ENCODE measurements at regions of chr10 and their contacts with region 1.

Region 1: DNA sequence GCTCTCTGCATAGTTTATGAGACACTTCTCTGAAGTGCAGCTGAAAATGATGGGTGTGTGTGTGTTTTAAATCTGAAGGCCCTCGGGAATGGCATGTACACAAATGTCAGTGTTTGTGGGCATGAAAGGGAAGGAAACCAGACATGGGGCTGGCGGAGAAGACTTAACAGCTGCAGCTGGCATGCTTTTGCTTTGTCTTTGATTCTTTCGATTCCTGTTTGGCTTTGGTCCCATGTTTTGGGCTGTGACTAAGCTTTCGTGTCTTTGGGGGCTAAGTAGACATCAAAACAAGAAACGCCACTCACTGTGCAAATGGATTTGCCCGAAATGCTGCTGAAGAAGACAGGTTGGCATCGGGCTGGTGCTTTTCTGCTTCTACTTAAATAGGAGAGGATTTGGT is 179.3 kb downstream of the PFKFB3 start:
- DNase-seq: peak; percentile 64
- H3K4me3 Mint-ChIP-seq: peak overlapping the region; percentile 47
- H3K27ac Mint-ChIP-seq: peak overlapping the region; percentile 77
- H3K4me1 Mint-ChIP-seq: peaks cover 29% of the 10 kb centered on the region
- H3K27me3 Mint-ChIP-seq: no peaks in the 10 kb centered on the region

Region 2: GRCh38 chr10:6364893-6365292 is 17.2 kb before region 1 on chr10:
- CTCF ChIA-PET with region 1: interaction called, 11 read pairs
- POLR2A ChIA-PET with region 1: no interaction called
- intact Hi-C with region 1: no loop called
- DNase-seq: no peak
- H3K4me3 Mint-ChIP-seq: no peak overlapping the region
- H3K27ac Mint-ChIP-seq: no peak overlapping the region
- H3K4me1 Mint-ChIP-seq: no peaks in the 10 kb centered on the region
- H3K27me3 Mint-ChIP-seq: peaks cover 2% of the 10 kb centered on the region